PC-9 (cell line): ENCODE measurements at regions of chr20 and their contacts with region 1.

Region 1: GRCh38 chr20:17898548-17898994 is 70.0 kb downstream of the SNX5 start:
- DNase-seq: peak; percentile 33 to 65
- H3K4me3 ChIP-seq: no peak overlapping the region
- H3K27ac ChIP-seq: no peak overlapping the region
- H3K4me1 ChIP-seq: no peaks in the 10 kb centered on the region
- H3K27me3 ChIP-seq: no peaks in the 10 kb centered on the region
- CTCF ChIP-seq: peak; percentile 96

Region 2: GRCh38 chr20:17611540-17612286 is 286.9 kb before region 1 on chr20:
- CTCF ChIA-PET with region 1: no interaction called
- POLR2A ChIA-PET with region 1: no interaction called
- intact Hi-C with region 1: loop called (anchors 2 kb)
- DNase-seq: peak in 1 of 2 experiments; percentile 48
- H3K4me3 ChIP-seq: no peak overlapping the region
- H3K27ac ChIP-seq: no peak overlapping the region
- H3K4me1 ChIP-seq: no peaks in the 10 kb centered on the region
- H3K27me3 ChIP-seq: no peaks in the 10 kb centered on the region
- CTCF ChIP-seq: peak; percentile 58

Region 3: GRCh38 chr20:17651760-17652388 is 246.7 kb before region 1 on chr20:
- CTCF ChIA-PET with region 1: no interaction called
- POLR2A ChIA-PET with region 1: no interaction called
- intact Hi-C with region 1: loop called (anchors 1 kb)
- DNase-seq: peak in 1 of 2 experiments; percentile 30
- H3K4me3 ChIP-seq: no peak overlapping the region
- H3K27ac ChIP-seq: no peak overlapping the region
- H3K4me1 ChIP-seq: no peaks in the 10 kb centered on the region
- H3K27me3 ChIP-seq: no peaks in the 10 kb centered on the region
- CTCF ChIP-seq: peak; percentile 39; the same call in 1 of the 2 replicates